ENCODE measurements at regions of chr19 and their contacts with region 1.

Region 1: GRCh38 chr19:12847159-12848139 is 9.1 kb downstream of the MAST1 start:
- DNase-seq: peak; percentile 85
- H3K27ac ChIP-seq: no peak overlapping the region; the same call in 1 of the 2 replicates
- CTCF ChIP-seq: peak; percentile 98

Region 2: DNA sequence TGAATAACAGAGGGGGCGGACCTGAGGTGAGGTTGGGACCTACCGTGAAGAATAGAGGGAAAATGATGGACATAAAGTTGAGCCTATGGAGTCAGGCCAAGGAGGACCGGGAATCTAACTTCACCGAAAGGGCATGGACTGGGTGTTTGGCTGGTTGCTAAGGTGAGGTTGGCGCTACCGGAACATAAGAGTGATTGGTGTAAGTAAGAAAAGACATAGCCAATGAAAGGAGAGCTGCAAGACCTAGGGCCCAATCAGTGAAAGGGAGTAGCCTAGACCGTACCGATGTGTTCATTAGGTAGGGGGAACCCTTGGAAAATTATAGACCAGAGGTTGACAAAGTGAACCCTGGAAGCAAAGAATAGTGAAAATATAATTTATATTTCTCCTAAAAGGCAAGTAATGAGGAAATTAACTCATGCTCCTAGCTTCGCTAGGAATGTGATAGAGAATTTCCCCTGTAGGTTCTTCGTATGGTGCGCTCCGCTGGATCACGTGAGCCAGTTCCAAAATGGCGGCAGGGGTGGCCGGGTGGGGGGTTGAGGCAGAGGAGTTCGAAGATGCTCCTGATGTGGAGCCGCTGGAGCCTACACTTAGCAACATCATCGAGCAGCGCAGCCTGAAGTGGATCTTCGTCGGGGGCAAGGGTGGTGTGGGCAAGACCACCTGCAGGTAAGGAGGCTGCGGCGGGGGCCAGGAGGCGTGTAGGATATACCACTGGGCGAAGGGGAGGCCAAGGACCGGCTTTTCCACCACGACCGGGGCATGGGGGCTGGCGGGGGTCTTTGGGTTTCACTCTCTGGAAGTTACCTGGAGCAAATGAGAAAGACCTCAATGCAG is 110.2 kb before region 1 on chr19 and contains the start of gene GET3:
- CTCF ChIA-PET with region 1: no interaction called
- POLR2A ChIA-PET with region 1: no interaction called
- DNase-seq: peak; percentile 99
- H3K27ac ChIP-seq: peak within 1 kb of the TSS; percentile 96
- CTCF ChIP-seq: no peak

Region 3: DNA sequence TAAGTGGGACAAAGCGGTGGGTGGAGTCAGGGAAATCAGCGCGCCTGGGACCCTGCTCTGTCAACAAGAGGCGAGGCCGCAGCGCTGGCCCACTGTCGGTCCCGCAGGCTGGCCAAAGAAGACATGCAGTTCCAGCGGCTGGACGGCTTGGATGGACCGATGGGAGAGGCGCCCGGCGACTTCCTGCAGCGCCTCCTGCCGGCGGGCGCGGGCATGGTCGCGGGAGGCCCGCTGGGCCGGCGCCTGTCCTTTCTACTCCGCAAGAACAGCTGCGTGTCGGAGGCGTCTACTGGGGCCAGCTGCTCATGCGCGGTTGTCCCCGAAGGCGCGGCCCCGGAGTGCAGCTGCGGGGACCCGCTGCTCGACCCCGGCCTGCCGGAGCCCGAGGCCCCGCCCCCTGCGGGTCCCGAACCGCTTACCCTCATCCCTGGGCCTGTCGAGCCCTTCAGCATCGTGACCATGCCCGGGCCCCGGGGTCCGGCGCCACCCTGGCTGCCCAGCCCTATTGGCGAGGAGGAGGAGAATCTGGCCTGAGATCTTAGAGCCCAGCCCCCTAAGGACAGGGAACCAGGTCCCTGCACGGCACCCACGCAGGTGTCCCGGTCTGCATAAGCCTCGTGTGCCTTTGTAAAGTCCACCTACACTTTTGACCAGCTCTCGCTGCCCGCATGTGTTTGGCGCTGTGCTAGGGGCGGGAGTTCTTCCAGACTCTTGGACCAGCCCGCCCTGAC is 89.7 kb before region 1 on chr19:
- CTCF ChIA-PET with region 1: interaction called, 25 read pairs
- POLR2A ChIA-PET with region 1: no interaction called
- DNase-seq: peak; percentile 27
- H3K27ac ChIP-seq: no peak overlapping the region
- CTCF ChIP-seq: peak; percentile 76

Region 4: DNA sequence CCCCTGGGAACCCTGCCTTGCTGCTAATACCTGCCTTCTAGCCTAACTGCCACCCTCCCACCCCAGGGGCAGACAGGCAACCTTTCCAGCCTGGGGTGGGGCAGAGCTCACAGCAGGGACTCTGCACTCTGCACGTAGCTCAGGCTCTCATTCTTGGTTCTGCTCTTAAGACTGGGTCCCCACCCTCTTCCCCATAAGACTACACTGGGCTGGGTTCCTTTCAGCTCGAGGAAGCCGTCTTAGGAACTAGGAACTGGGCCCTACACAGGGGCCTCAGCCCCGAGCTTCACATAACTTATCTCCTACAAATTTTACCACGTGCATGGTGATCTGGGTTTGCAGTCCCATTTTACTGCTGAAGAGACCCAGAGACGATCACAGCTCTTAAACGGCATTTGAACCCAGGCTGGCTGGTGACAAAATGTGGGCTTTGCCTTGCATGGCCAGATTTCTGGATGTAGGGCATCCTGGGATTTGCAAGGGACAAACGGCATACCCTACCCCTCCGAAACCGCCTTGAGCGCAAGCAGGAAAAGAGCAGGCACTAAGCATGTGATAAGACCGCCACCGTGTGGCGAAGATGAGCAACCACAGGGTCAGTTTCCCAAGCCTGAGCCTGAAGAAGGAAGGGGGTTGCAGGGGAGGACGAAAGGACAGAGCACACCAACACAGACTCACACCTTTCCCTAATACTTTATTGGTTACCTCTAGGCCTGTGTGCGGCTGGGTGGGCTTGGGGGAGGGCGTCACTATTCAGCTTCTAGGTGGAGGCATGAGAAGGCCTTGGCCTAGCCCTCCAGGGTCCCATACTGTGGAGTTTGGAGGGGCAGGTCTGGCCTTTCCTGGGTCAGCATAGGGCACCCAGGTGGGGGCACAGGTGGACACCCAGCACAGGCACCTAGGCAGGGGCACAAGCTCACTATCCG is 51.0 kb before region 1 on chr19:
- CTCF ChIA-PET with region 1: interaction called, 10 read pairs
- POLR2A ChIA-PET with region 1: no interaction called
- DNase-seq: peak; percentile 51
- H3K27ac ChIP-seq: peak overlapping the region; percentile 100
- CTCF ChIP-seq: peak; percentile 90

Region 5: GRCh38 chr19:12837225-12837624 is 10.2 kb before region 1 on chr19:
- CTCF ChIA-PET with region 1: interaction called, 11 read pairs
- POLR2A ChIA-PET with region 1: no interaction called
- DNase-seq: peak; percentile 79
- H3K27ac ChIP-seq: no peak overlapping the region
- CTCF ChIP-seq: no peak

Region 6: GRCh38 chr19:12864721-12865715 is 17.6 kb after region 1 on chr19:
- CTCF ChIA-PET with region 1: interaction called, 10 read pairs
- POLR2A ChIA-PET with region 1: no interaction called
- DNase-seq: no peak
- H3K27ac ChIP-seq: no peak overlapping the region
- CTCF ChIP-seq: no peak

Region 7: GRCh38 chr19:12899891-12900518 is 52.6 kb after region 1 on chr19:
- CTCF ChIA-PET with region 1: no interaction called
- POLR2A ChIA-PET with region 1: no interaction called
- DNase-seq: no peak
- H3K27ac ChIP-seq: peak overlapping the region; percentile 23; the same call in 1 of the 2 replicates
- CTCF ChIP-seq: no peak

Region 8: DNA sequence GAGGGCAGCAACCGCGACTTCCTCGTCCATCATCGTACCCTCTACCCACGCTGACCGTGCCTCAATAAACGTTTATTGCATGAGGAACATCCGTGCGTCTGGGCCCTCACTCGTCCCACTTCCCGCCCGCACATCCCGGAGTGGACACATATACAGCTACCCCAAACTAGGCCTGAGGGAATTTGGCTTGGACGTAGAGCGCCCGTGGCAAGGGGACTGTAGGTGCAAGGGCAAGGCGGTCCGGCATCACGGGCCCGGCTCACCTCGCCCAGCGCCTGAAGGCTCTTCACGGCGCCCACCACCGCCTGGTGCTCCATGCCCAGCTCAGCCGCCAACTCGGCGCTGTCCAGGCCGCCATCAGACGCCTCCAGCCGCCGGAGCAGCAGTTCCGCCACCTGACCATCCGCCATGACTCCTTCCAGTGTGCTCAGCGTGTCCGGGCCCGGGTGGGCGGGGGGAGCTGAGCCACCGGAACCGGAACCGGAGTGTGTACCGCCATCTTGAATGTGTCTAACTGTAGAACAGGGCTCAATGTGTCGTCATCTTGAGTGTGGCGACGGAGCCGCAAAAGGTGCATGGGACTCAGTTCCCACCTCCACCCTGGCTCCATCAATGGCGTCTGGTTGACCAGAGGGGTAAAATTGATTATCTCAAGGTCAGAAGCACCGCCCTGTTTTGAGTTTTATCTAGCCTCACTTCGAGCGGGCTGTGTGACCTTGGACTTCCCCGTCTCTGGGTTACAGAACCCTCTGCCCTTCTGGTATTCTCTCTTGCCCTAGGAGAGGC is 86.0 kb after region 1 on chr19 and contains the start of gene FARSA:
- CTCF ChIA-PET with region 1: no interaction called
- POLR2A ChIA-PET with region 1: no interaction called
- DNase-seq: peak; percentile 91
- H3K27ac ChIP-seq: peak within 1 kb of the TSS; percentile 75
- CTCF ChIP-seq: no peak

Measured in RWPE1 (cell line).